ENCODE measurements at regions of chr11 and their contacts with region 1.

Region 1: GRCh38 chr11:7696424-7696823 is 9.9 kb downstream of the OVCH2 start:
- DNase-seq: peak; percentile 21
- H3K4me3 Mint-ChIP-seq: no peak overlapping the region
- H3K27ac Mint-ChIP-seq: no peak overlapping the region
- H3K4me1 Mint-ChIP-seq: peaks cover 5% of the 10 kb centered on the region
- H3K27me3 Mint-ChIP-seq: peaks cover 25% of the 10 kb centered on the region

Region 2: DNA sequence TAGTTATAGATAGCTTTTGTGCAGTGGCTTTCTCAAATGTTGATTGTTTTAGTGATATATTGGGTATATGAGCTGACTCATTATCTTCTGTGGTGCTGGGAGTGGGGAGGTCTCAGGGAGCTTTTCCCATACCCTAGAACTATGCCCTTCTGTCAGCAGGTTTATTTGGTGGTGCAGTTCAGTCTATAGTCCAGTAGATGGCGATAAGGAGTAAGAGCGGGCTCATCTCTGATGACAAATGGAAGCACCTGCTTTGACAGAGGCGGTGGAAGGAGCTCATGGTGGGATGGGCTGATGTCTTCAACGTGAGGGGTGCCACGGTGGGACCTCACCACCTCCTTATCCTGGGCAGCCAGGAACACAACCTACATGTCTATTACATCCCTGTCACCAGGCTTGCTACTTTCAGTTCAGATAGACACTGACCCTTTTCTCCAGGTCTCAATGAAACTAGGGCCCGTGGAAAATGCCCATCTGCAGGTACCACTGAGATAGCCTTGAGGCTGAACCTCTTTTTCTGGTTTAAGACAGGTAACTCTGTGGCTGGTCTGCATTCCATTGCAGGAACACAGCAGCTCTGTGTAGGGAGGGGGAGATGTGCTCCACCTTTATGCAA is 883.9 kb before region 1 on chr11:
- CTCF ChIA-PET with region 1: no interaction called
- POLR2A ChIA-PET with region 1: no interaction called
- intact Hi-C with region 1: loop called (anchors 2 kb)
- DNase-seq: peak; percentile 31
- H3K4me3 Mint-ChIP-seq: no peak overlapping the region
- H3K27ac Mint-ChIP-seq: no peak overlapping the region
- H3K4me1 Mint-ChIP-seq: no peaks in the 10 kb centered on the region
- H3K27me3 Mint-ChIP-seq: peaks cover 25% of the 10 kb centered on the region

Region 3: DNA sequence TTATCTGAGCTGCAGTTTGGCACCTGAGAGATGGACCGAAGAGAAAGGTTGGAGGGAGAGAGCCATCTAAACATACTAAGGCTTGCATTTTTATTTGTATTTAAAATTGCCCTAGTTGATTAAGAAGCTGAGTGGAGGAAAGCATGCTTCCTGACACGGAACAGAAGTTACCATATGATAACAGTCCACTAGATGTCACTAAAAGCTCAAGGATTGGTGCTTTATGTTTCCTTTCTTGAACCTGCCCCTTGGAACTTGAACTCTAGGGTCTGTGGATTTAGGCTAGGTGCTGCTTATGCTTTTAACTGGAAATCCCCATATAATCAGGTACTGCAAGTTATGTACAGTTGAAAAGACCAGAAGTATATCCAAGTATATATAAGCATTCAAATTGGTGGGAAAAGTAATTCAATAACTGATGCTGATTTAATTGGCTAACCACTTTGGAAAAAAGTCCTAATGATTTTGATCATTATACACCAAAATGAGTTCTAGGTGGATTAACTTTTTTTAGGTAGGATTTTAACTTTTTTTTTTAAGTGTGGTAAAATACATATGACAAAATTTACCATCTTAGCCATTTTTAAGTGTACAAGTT is 598.1 kb before region 1 on chr11:
- CTCF ChIA-PET with region 1: interaction called, 11 read pairs
- POLR2A ChIA-PET with region 1: no interaction called
- intact Hi-C with region 1: loop called (anchors 2 kb)
- DNase-seq: no peak
- H3K4me3 Mint-ChIP-seq: no peak overlapping the region
- H3K27ac Mint-ChIP-seq: no peak overlapping the region
- H3K4me1 Mint-ChIP-seq: no peaks in the 10 kb centered on the region
- H3K27me3 Mint-ChIP-seq: peaks cover 3% of the 10 kb centered on the region

Region 4: DNA sequence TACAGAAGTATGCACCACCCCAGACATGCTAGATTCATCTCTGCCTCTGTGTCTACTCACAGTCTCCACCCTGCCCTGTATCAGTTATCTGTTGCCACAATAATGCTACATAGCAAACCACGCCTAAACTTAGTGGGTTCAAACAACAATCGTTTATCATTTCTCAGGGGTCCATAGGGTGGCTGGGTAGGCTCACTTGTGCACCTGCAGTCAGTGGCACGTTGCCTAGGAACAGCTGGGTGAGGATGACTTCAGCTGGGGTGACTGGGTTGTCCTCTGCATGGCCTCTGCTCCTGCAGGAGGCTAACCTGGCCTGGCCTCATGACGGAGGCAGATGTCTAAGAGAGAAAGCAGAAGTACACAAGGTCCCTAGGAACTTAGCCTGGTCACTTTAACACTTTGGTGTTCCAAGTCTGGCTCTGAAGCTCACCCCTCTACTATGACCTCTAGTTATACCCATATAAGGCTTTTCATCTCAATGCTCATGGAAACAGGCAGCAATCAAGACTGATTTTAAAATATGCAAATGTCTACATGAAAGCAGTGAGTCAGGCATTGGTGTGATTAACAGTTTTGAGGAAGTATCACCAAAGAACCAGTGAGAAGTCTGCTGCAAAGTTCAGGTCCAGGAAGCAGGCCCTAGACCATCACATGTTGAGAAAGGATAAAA is 200.4 kb before region 1 on chr11:
- CTCF ChIA-PET with region 1: no interaction called
- POLR2A ChIA-PET with region 1: no interaction called
- intact Hi-C with region 1: no loop called
- DNase-seq: no peak
- H3K4me3 Mint-ChIP-seq: no peak overlapping the region
- H3K27ac Mint-ChIP-seq: no peak overlapping the region
- H3K4me1 Mint-ChIP-seq: peaks cover 7% of the 10 kb centered on the region
- H3K27me3 Mint-ChIP-seq: peaks cover 2% of the 10 kb centered on the region

Region 5: GRCh38 chr11:7665473-7666291 is 30.7 kb before region 1 on chr11:
- CTCF ChIA-PET with region 1: interaction called, 13 read pairs
- POLR2A ChIA-PET with region 1: no interaction called
- intact Hi-C with region 1: loop called (anchors 2 kb)
- DNase-seq: peak; percentile 85
- H3K4me3 Mint-ChIP-seq: no peak overlapping the region
- H3K27ac Mint-ChIP-seq: no peak overlapping the region
- H3K4me1 Mint-ChIP-seq: peaks cover under 1% of the 10 kb centered on the region
- H3K27me3 Mint-ChIP-seq: no peaks in the 10 kb centered on the region

Region 6: GRCh38 chr11:7804226-7804625 is 107.8 kb after region 1 on chr11:
- CTCF ChIA-PET with region 1: no interaction called
- POLR2A ChIA-PET with region 1: no interaction called
- intact Hi-C with region 1: no loop called
- DNase-seq: no peak
- H3K4me3 Mint-ChIP-seq: no peak overlapping the region
- H3K27ac Mint-ChIP-seq: no peak overlapping the region
- H3K4me1 Mint-ChIP-seq: no peaks in the 10 kb centered on the region
- H3K27me3 Mint-ChIP-seq: peaks cover 4% of the 10 kb centered on the region